GM12878 (cell line): ENCODE measurements at regions of chr5 and their contacts with region 1.

Region 1: DNA sequence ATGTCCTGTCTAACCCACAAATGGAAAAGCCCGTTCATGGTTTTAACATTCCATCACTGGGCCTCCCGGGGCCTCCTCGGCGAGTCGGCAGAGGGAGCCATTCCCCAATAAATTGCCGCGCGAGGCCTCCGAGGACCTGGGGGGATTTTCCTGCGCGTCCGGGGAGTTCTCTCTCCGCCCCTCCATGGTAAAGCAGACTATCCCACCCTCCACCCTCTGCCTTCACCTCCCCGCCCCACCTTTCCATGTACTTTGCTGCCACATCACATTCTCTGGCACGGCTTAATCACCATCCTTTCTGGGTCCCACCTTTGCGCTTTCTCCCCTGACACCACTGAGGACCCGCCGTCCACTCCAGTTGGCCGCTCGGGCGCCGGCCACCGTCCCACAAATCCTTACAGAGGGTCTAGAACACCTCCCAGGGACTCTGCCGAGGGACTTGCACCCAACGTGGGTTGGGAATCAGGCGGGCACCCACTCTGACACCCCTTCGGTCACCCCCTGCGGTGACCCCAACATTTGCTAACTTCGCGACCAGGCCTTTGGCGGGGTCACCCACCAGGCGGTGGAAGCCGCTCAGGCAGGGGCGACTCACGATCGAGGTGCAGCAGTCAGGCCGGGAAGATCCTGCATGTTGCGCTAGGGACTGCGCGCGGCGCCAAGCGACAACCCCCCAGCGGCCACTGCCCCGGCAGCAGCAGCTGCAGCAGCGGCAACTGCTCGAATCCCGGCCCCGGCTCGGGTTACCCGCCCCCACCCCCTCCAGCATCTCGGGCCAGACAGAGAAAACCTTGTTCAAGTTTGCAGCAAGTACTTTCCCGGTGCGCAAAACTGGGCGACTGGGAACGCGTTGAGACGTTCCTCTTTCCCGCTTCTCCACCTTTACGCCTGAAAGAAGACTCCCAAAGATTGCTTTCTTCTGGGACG is at the start of gene MEGF10:
- DNase-seq: no peak
- ATAC-seq: peak; percentile 77
- H3K4me3 ChIP-seq: no peak within 1 kb of the TSS
- H3K27ac ChIP-seq: no peak within 1 kb of the TSS
- H3K4me1 ChIP-seq: no peaks in the 10 kb centered on the region
- H3K27me3 ChIP-seq: peaks cover 1 to 13% of the 10 kb centered on the region in 2 experiments
- CTCF ChIP-seq: peak; percentile 57 to 62 (median 61)
- EP300 ChIP-seq: no peak
- POLR2A ChIP-seq: no peak
- RAD21 ChIP-seq: peak; percentile 89
- polyA plus RNA-seq, gene MEGF10: not detected

Region 2: GRCh38 chr5:127441799-127442484 is 151.7 kb after region 1 on chr5:
- CTCF ChIA-PET with region 1: no interaction called
- POLR2A ChIA-PET with region 1: no interaction called
- RAD21 ChIA-PET with region 1: no interaction called
- SMC1A ChIA-PET with region 1: no interaction called
- in situ Hi-C with region 1: no loop called
- intact Hi-C with region 1: loop called (anchors 2 kb)
- DNase-seq: no peak
- ATAC-seq: no peak
- H3K4me3 ChIP-seq: no peak overlapping the region
- H3K27ac ChIP-seq: no peak overlapping the region
- H3K4me1 ChIP-seq: no peaks in the 10 kb centered on the region
- H3K27me3 ChIP-seq: no peaks in the 10 kb centered on the region
- CTCF ChIP-seq: peak in 2 of 3 experiments; percentile 24 to 32; a peak in 2 of 6 replicates
- EP300 ChIP-seq: no peak
- POLR2A ChIP-seq: no peak
- RAD21 ChIP-seq: peak; percentile 72

Region 3: GRCh38 chr5:127833999-127834953 is 544.0 kb after region 1 on chr5:
- CTCF ChIA-PET with region 1: no interaction called
- POLR2A ChIA-PET with region 1: no interaction called
- RAD21 ChIA-PET with region 1: no interaction called
- SMC1A ChIA-PET with region 1: no interaction called
- in situ Hi-C with region 1: no loop called
- intact Hi-C with region 1: no loop called
- DNase-seq: no peak
- ATAC-seq: peak; percentile 65
- H3K4me3 ChIP-seq: no peak overlapping the region
- H3K27ac ChIP-seq: no peak overlapping the region
- H3K4me1 ChIP-seq: no peaks in the 10 kb centered on the region
- H3K27me3 ChIP-seq: no peaks in the 10 kb centered on the region
- CTCF ChIP-seq: no peak; a peak in 1 of 6 replicates
- EP300 ChIP-seq: no peak
- POLR2A ChIP-seq: no peak
- RAD21 ChIP-seq: 0 out of 2 replicates have a peak, but pooled peaks have one; percentile 10